ENCODE measurements at regions of chr3 and their contacts with region 1.

Region 1: GRCh38 chr3:106862067-106862466 is 515.2 kb upstream of the CCDC54 start:
- DNase-seq: peak; percentile 70
- H3K4me3 ChIP-seq: no peak overlapping the region
- H3K27ac ChIP-seq: peak overlapping the region; percentile 76
- H3K4me1 ChIP-seq: peaks cover 20% of the 10 kb centered on the region
- H3K27me3 ChIP-seq: no peaks in the 10 kb centered on the region
- CTCF ChIP-seq: peak; percentile 55; the same call in 1 of the 2 replicates

Region 2: GRCh38 chr3:106620646-106621045 is 241.4 kb before region 1 on chr3:
- CTCF ChIA-PET with region 1: no interaction called
- POLR2A ChIA-PET with region 1: no interaction called
- intact Hi-C with region 1: loop called (anchors 2 kb)
- DNase-seq: peak; percentile 83
- H3K4me3 ChIP-seq: no peak overlapping the region
- H3K27ac ChIP-seq: peak overlapping the region; percentile 88
- H3K4me1 ChIP-seq: peaks cover 13% of the 10 kb centered on the region
- H3K27me3 ChIP-seq: no peaks in the 10 kb centered on the region
- CTCF ChIP-seq: no peak

Region 3: GRCh38 chr3:107117922-107118536 is 256.0 kb after region 1 on chr3:
- CTCF ChIA-PET with region 1: interaction called, 5 read pairs
- POLR2A ChIA-PET with region 1: no interaction called
- intact Hi-C with region 1: loop called (anchors 2 kb)
- DNase-seq: peak; percentile 93
- H3K4me3 ChIP-seq: no peak overlapping the region
- H3K27ac ChIP-seq: peak overlapping the region; percentile 59
- H3K4me1 ChIP-seq: peaks cover 17% of the 10 kb centered on the region
- H3K27me3 ChIP-seq: no peaks in the 10 kb centered on the region
- CTCF ChIP-seq: peak; percentile 86